ENCODE measurements at regions of chr14 and their contacts with region 1.

Region 1: DNA sequence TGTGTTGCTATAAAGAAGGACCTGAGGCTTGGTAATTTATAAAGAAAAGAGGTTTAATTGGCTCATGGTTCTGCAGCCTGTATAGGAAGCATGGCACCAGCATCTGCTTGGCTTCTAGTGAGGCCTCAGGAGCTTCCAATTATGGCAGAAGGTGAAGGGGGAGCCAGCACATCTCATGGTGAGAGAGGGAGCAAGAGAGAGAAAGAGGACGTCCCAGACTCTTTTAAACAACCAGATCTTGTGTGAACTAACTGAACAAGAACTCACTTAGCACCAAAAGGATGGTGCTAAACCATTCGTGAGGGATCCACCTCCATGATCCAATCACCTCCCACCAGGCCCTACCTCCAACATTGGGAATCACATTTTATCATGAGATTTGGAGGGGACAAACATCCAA is 6.1 kb upstream of the SNAPC1 start:
- DNase-seq: no peak
- H3K4me3 Mint-ChIP-seq: no peak overlapping the region
- H3K27ac Mint-ChIP-seq: no peak overlapping the region
- H3K4me1 Mint-ChIP-seq: peaks cover 12% of the 10 kb centered on the region
- H3K27me3 Mint-ChIP-seq: no peaks in the 10 kb centered on the region
- CTCF ChIP-seq: no peak

Region 2: DNA sequence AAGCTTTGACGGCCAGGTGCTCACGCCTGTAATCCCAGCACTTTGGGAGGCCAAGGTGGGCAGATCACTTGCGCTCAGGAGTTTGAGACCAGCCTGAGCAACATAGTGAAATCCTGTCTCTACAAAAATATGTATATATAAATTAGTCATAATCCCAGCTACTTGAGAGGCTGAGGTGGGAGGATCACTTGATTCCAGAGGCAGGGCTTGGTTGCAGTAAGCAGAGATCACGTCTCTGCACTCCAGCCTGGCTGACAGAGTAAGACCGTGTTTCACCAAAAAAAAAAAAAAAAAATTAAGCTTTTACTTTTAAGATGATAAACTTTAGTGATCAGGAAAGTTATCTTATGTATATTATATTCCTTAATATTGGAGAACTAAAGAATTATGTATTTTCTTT is 11.9 kb before region 1 on chr14:
- CTCF ChIA-PET with region 1: interaction called, 5 read pairs
- POLR2A ChIA-PET with region 1: interaction called, 158 read pairs
- intact Hi-C with region 1: no loop called
- DNase-seq: no peak
- H3K4me3 Mint-ChIP-seq: no peak overlapping the region
- H3K27ac Mint-ChIP-seq: no peak overlapping the region
- H3K4me1 Mint-ChIP-seq: peaks cover 6% of the 10 kb centered on the region
- H3K27me3 Mint-ChIP-seq: no peaks in the 10 kb centered on the region
- CTCF ChIP-seq: no peak